ENCODE measurements at regions of chr6 and their contacts with region 1.

Region 1: GRCh38 chr6:57316581-57317059 is 810 bp upstream of the PRIM2 start:
- DNase-seq: peak; percentile 64 to 90 (median 76)
- ATAC-seq: peak; percentile 83
- H3K4me3 ChIP-seq: peak overlapping the region; percentile 75
- H3K4me3 Mint-ChIP-seq: peak overlapping the region; percentile 97
- H3K27ac ChIP-seq: peak overlapping the region; percentile 20 to 37
- H3K27ac Mint-ChIP-seq: peak overlapping the region; percentile 84
- H3K4me1 ChIP-seq: peaks cover 12% of the 10 kb centered on the region
- H3K4me1 Mint-ChIP-seq: peaks cover 35% of the 10 kb centered on the region
- H3K27me3 ChIP-seq: no peaks in the 10 kb centered on the region
- H3K27me3 Mint-ChIP-seq: no peaks in the 10 kb centered on the region
- CTCF ChIP-seq: peak; percentile 93

Region 2: DNA sequence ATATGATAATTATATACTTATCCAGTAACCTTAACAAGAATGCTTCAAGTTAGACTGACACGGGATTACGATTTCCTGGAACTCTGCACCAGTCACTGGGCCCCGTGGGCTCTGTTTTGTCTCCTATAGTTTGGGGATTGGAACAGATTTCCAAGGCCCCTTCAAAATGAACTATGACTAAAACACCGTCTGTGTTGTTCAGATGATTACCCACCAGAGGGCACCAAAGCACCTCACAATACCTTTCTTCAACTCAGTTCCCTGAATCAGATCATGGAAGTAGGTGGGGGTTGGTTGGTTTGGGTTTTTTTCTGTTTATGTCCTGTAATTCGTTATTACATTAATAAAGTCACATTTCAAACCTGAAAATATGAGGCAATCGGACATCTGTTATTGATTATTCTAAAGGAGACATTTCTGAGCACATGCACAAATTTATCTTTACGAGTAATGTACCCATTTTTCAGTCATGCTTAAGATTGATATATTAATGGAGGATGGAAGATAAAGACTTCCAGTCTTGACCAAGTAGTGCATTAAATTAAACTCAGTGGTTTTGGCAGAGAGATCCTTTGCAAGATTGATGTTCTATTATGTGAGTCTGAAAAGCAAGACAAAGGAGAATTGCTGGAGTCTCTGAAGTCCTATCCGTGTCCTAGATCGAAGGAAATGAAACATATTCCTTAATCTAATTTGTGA is 957.3 kb before region 1 on chr6:
- CTCF ChIA-PET with region 1: no interaction called
- POLR2A ChIA-PET with region 1: no interaction called
- intact Hi-C with region 1: loop called (anchors 2 to 5 kb)
- DNase-seq: peak in 13 of 14 experiments; percentile 7 to 73 (median 34)
- ATAC-seq: peak; percentile 68
- H3K4me3 ChIP-seq: no peak overlapping the region
- H3K4me3 Mint-ChIP-seq: no peak overlapping the region
- H3K27ac ChIP-seq: no peak overlapping the region
- H3K27ac Mint-ChIP-seq: no peak overlapping the region
- H3K4me1 ChIP-seq: no peaks in the 10 kb centered on the region
- H3K4me1 Mint-ChIP-seq: no peaks in the 10 kb centered on the region
- H3K27me3 ChIP-seq: no peaks in the 10 kb centered on the region
- H3K27me3 Mint-ChIP-seq: no peaks in the 10 kb centered on the region
- CTCF ChIP-seq: peak; percentile 92

Region 3: GRCh38 chr6:56902641-56903464 is 413.8 kb before region 1 on chr6:
- CTCF ChIA-PET with region 1: interaction called, 41 read pairs
- POLR2A ChIA-PET with region 1: interaction called, 14 read pairs
- intact Hi-C with region 1: loop called (anchors 1 kb)
- DNase-seq: peak in 3 of 14 experiments; percentile 36 to 61 (median 54)
- ATAC-seq: no peak
- H3K4me3 ChIP-seq: no peak overlapping the region
- H3K4me3 Mint-ChIP-seq: no peak overlapping the region
- H3K27ac ChIP-seq: no peak overlapping the region
- H3K27ac Mint-ChIP-seq: no peak overlapping the region
- H3K4me1 ChIP-seq: peaks cover 4% of the 10 kb centered on the region
- H3K4me1 Mint-ChIP-seq: no peaks in the 10 kb centered on the region
- H3K27me3 ChIP-seq: no peaks in the 10 kb centered on the region
- H3K27me3 Mint-ChIP-seq: peaks cover 11% of the 10 kb centered on the region
- CTCF ChIP-seq: peak; percentile 75

Region 4: DNA sequence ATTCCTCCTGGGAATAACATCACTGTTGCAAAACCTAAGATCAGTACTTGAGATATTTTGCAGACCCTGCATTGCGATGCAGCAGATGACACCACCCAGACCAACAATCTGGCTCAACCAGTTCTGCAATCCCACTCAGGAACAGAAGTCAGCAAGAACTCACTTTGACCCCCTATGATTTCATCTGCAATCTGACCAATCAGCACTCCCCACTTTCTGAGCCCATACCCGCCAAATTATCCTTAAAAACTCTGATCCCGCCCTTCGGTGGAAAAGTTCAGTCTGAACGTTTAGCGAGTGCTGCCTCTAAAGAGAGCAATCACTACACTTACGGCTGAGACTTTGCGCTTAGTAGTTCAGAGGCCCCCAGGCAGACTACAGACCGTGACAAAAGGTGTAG is 287.4 kb before region 1 on chr6:
- CTCF ChIA-PET with region 1: no interaction called
- POLR2A ChIA-PET with region 1: no interaction called
- intact Hi-C with region 1: no loop called
- DNase-seq: no peak
- ATAC-seq: no peak
- H3K4me3 ChIP-seq: no peak overlapping the region
- H3K4me3 Mint-ChIP-seq: no peak overlapping the region
- H3K27ac ChIP-seq: no peak overlapping the region
- H3K27ac Mint-ChIP-seq: no peak overlapping the region
- H3K4me1 ChIP-seq: no peaks in the 10 kb centered on the region
- H3K4me1 Mint-ChIP-seq: no peaks in the 10 kb centered on the region
- H3K27me3 ChIP-seq: peaks cover 0 to 3% of the 10 kb centered on the region in 2 experiments
- H3K27me3 Mint-ChIP-seq: peaks cover 21% of the 10 kb centered on the region
- CTCF ChIP-seq: no peak

Region 5: DNA sequence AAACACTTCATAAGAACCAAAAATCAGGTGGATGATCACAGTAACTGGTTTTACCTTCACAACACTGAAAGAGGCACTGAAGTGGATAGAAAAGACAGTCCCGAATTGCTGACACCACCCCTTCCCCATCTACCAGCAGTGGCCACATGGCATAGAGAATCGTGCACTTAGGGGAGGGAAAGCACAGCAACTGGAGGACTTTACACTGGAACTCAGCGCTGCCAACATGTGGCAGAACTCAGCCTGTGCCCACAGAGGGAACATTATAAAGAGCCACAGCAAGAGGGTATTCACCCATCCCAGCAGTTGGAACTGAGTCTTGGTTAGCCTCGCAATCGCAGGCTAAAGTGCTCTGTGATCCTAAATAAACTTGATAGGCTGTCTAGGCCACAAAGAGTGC is 276.6 kb before region 1 on chr6:
- CTCF ChIA-PET with region 1: no interaction called
- POLR2A ChIA-PET with region 1: no interaction called
- intact Hi-C with region 1: loop called in 1 of 2 experiments (anchors 5 kb)
- DNase-seq: no peak
- ATAC-seq: no peak
- H3K4me3 ChIP-seq: no peak overlapping the region
- H3K4me3 Mint-ChIP-seq: no peak overlapping the region
- H3K27ac ChIP-seq: no peak overlapping the region
- H3K27ac Mint-ChIP-seq: no peak overlapping the region
- H3K4me1 ChIP-seq: no peaks in the 10 kb centered on the region
- H3K4me1 Mint-ChIP-seq: no peaks in the 10 kb centered on the region
- H3K27me3 ChIP-seq: peaks cover 15 to 30% of the 10 kb centered on the region in 2 experiments
- H3K27me3 Mint-ChIP-seq: peaks cover 44% of the 10 kb centered on the region
- CTCF ChIP-seq: no peak

Region 6: GRCh38 chr6:57172136-57173055 is 144.2 kb before region 1 on chr6 and contains the start of gene BAG2:
- CTCF ChIA-PET with region 1: interaction called, 3 read pairs
- POLR2A ChIA-PET with region 1: interaction called, 14 read pairs
- intact Hi-C with region 1: loop called (anchors 5 kb)
- DNase-seq: peak; percentile 71 to 92 (median 82)
- ATAC-seq: peak; percentile 85
- H3K4me3 ChIP-seq: peak within 1 kb of the TSS; percentile 69
- H3K4me3 Mint-ChIP-seq: peak within 1 kb of the TSS; percentile 89
- H3K27ac ChIP-seq: peak within 1 kb of the TSS; percentile 75 to 79
- H3K27ac Mint-ChIP-seq: peak within 1 kb of the TSS; percentile 83
- H3K4me1 ChIP-seq: peaks cover 17% of the 10 kb centered on the region
- H3K4me1 Mint-ChIP-seq: peaks cover 42% of the 10 kb centered on the region
- H3K27me3 ChIP-seq: no peaks in the 10 kb centered on the region
- H3K27me3 Mint-ChIP-seq: no peaks in the 10 kb centered on the region
- CTCF ChIP-seq: no peak
- total RNA-seq, gene BAG2: 5.4 to 5.6 TPM

Region 7: GRCh38 chr6:57216235-57217101 is 100.2 kb before region 1 on chr6:
- CTCF ChIA-PET with region 1: interaction called, 8 read pairs
- POLR2A ChIA-PET with region 1: no interaction called
- intact Hi-C with region 1: loop called in 1 of 2 experiments (anchors 5 kb)
- DNase-seq: no peak
- ATAC-seq: no peak
- H3K4me3 ChIP-seq: no peak overlapping the region
- H3K4me3 Mint-ChIP-seq: no peak overlapping the region
- H3K27ac ChIP-seq: no peak overlapping the region
- H3K27ac Mint-ChIP-seq: no peak overlapping the region
- H3K4me1 ChIP-seq: peaks cover 16% of the 10 kb centered on the region
- H3K4me1 Mint-ChIP-seq: peaks cover 37% of the 10 kb centered on the region
- H3K27me3 ChIP-seq: no peaks in the 10 kb centered on the region
- H3K27me3 Mint-ChIP-seq: no peaks in the 10 kb centered on the region
- CTCF ChIP-seq: no peak

Region 8: GRCh38 chr6:57974653-57975052 is 658.0 kb after region 1 on chr6:
- CTCF ChIA-PET with region 1: no interaction called
- POLR2A ChIA-PET with region 1: no interaction called
- intact Hi-C with region 1: loop called in 1 of 2 experiments (anchors 10 kb)
- DNase-seq: no peak
- ATAC-seq: no peak
- H3K4me3 ChIP-seq: no peak overlapping the region
- H3K4me3 Mint-ChIP-seq: no peak overlapping the region
- H3K27ac ChIP-seq: no peak overlapping the region
- H3K27ac Mint-ChIP-seq: no peak overlapping the region
- H3K4me1 ChIP-seq: no peaks in the 10 kb centered on the region
- H3K4me1 Mint-ChIP-seq: no peaks in the 10 kb centered on the region
- H3K27me3 ChIP-seq: no peaks in the 10 kb centered on the region
- H3K27me3 Mint-ChIP-seq: peaks cover 28% of the 10 kb centered on the region
- CTCF ChIP-seq: no peak